ENCODE measurements at regions of chr4 and their contacts with region 1.

Region 1: DNA sequence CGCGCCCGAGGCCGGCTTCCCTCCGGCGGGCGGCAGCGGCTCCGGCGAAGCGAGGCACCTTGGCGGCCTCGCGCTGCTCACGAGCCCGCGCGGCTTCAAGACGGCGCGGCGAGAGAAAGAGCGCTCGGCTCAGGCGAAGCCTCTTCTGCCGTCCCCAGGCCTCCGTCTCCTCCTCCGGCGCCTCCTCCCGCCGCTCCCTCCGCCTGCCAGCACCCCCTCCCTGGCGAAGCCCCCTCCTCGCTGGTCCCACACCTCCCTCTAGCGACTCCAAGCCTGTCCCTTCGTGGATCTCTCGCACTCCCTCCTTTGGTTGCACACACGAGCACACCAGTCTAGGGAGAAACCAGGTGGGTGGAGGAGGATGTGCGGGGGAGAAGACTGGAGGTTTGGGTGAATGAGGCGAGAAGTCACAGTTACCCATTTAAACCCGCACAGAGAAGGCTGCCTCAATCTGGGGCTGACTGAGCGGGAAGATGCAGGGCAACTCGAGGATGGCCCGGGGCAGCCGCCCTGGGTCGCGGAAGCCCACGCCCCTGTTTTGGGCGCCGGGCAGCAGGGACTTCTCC is at the start of gene CAMK2D:
- DNase-seq: peak; percentile 81
- ATAC-seq: peak; percentile 56
- H3K4me3 ChIP-seq: peak within 1 kb of the TSS; percentile 99
- H3K27ac ChIP-seq: peak within 1 kb of the TSS; percentile 98
- H3K4me1 ChIP-seq: no peaks in the 10 kb centered on the region
- H3K27me3 ChIP-seq: no peaks in the 10 kb centered on the region
- CTCF ChIP-seq: peak; percentile 60 to 95 (median 69)
- EP300 ChIP-seq: peak in 1 of 2 experiments; percentile 33; a peak in 2 of 4 replicates
- POLR2A ChIP-seq: no peak
- RAD21 ChIP-seq: peak; percentile 89
- polyA plus RNA-seq, gene CAMK2D: 6.9 to 10.2 TPM

Region 2: GRCh38 chr4:113618205-113618604 is 143.5 kb before region 1 on chr4:
- CTCF ChIA-PET with region 1: no interaction called
- POLR2A ChIA-PET with region 1: no interaction called
- RAD21 ChIA-PET with region 1: interaction called, 5 read pairs
- SMC1A ChIA-PET with region 1: interaction called, 10 read pairs
- in situ Hi-C with region 1: no loop called
- intact Hi-C with region 1: no loop called
- DNase-seq: no peak
- ATAC-seq: peak; percentile 63
- H3K4me3 ChIP-seq: no peak overlapping the region
- H3K27ac ChIP-seq: no peak overlapping the region
- H3K4me1 ChIP-seq: peaks cover 4% of the 10 kb centered on the region; the same call in 1 of the 2 replicates
- H3K27me3 ChIP-seq: no peaks in the 10 kb centered on the region
- CTCF ChIP-seq: no peak
- EP300 ChIP-seq: peak; percentile 78 to 80; a peak in 3 of 4 replicates
- POLR2A ChIP-seq: no peak
- RAD21 ChIP-seq: no peak

Region 3: GRCh38 chr4:113684534-113685091 is 77.1 kb before region 1 on chr4:
- CTCF ChIA-PET with region 1: interaction called, 3 read pairs
- POLR2A ChIA-PET with region 1: interaction called, 3 read pairs
- RAD21 ChIA-PET with region 1: interaction called, 6 read pairs
- SMC1A ChIA-PET with region 1: interaction called, 17 read pairs
- in situ Hi-C with region 1: no loop called
- intact Hi-C with region 1: loop called (anchors 2 kb)
- DNase-seq: no peak
- ATAC-seq: peak; percentile 10; the same call in 2 of the 3 replicates
- H3K4me3 ChIP-seq: no peak overlapping the region
- H3K27ac ChIP-seq: no peak overlapping the region
- H3K4me1 ChIP-seq: peaks cover 32% of the 10 kb centered on the region
- H3K27me3 ChIP-seq: no peaks in the 10 kb centered on the region
- CTCF ChIP-seq: 0 out of 6 replicates have a peak, but pooled peaks of 1 of the 3 experiments have one; percentile 0
- EP300 ChIP-seq: no peak
- POLR2A ChIP-seq: no peak
- RAD21 ChIP-seq: 0 out of 2 replicates have a peak, but pooled peaks have one; percentile 4

Region 4: DNA sequence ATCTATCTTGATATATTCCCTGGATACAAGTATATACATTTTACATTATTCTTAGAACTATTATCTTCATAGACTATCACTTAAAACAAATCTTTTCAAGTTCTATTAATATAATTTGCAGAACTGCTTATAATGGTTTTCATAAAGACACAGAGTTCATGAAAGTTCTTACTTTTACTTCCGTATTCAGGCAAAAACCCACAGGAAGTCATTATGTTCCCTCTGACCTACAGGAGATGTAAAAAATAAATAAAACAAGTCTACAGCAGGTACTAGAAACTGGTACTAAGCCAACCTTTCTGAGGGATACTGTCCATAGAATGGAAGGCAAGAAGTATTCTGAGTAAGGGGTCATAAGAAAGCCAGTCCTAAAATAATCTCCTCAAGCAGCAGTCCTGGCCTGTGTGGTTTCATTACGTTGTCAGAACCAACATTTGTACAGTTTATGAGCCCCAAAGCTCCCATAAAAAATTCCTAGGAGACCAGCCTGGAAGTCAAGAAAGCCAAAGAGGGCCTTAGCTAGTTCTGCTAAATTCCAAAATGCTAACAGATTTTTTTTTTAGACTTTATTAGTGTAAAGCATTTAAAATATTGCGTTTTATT is 68.8 kb before region 1 on chr4:
- CTCF ChIA-PET with region 1: interaction called, 3 read pairs
- POLR2A ChIA-PET with region 1: interaction called, 3 read pairs
- RAD21 ChIA-PET with region 1: interaction called, 17 read pairs
- SMC1A ChIA-PET with region 1: interaction called, 17 read pairs
- in situ Hi-C with region 1: no loop called
- intact Hi-C with region 1: no loop called
- DNase-seq: no peak
- ATAC-seq: peak; percentile 89
- H3K4me3 ChIP-seq: no peak overlapping the region; the same call in 1 of the 2 replicates
- H3K27ac ChIP-seq: peak overlapping the region; percentile 52
- H3K4me1 ChIP-seq: peaks cover 16% of the 10 kb centered on the region
- H3K27me3 ChIP-seq: no peaks in the 10 kb centered on the region
- CTCF ChIP-seq: no peak
- EP300 ChIP-seq: peak in 1 of 2 experiments; percentile 56; a peak in 1 of 4 replicates
- POLR2A ChIP-seq: no peak
- RAD21 ChIP-seq: no peak

Region 5: GRCh38 chr4:113893546-113893945 is 131.8 kb after region 1 on chr4:
- CTCF ChIA-PET with region 1: no interaction called
- POLR2A ChIA-PET with region 1: no interaction called
- RAD21 ChIA-PET with region 1: no interaction called
- SMC1A ChIA-PET with region 1: no interaction called
- in situ Hi-C with region 1: no loop called
- intact Hi-C with region 1: no loop called
- DNase-seq: no peak
- ATAC-seq: no peak
- H3K4me3 ChIP-seq: no peak overlapping the region
- H3K27ac ChIP-seq: no peak overlapping the region
- H3K4me1 ChIP-seq: no peaks in the 10 kb centered on the region; the same call in 1 of the 2 replicates
- H3K27me3 ChIP-seq: no peaks in the 10 kb centered on the region
- CTCF ChIP-seq: 0 out of 6 replicates have a peak, but pooled peaks of 1 of the 3 experiments have one; percentile 6
- EP300 ChIP-seq: no peak
- POLR2A ChIP-seq: no peak
- RAD21 ChIP-seq: peak; percentile 40; the same call in 1 of the 2 replicates

Region 6: DNA sequence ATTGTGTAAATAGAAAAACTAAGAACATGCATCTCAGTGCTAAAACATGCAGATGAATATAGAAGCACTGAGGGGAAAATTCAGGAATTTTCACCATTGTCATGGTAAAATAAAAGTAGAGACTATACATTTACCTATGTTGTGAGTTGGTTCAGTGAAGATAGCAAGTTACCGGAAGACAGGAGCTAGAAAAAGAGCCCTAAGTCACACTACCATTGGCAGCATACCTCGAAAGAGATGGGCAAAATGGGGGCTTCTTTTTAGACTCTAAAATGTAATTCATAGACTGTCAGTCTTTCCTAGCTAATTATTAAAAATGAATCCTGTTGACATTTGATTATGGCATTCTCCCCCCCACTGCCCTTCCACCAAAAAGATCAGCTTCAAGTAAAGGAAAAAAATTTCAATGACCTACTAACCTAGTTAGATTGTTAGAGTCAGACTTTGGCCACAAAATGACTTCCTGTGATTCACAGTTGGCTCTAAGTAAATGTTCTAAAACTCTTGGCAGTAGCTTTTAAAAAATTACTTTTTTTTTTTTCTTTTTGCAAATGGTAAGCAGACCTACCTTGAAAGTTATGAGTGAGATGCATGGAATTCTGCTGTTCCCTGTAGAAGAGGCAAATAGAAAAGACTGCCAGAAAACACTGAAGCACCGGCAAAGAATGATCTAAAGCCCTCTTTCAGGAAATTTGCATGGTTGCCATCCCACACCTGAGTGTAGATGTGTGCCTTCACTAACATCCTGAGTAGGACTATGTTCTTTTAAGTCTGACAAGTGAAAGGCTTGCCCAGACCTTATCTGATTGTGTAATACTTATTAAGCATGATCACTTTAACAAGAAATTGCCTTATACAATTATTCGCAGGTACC is 244.1 kb after region 1 on chr4:
- CTCF ChIA-PET with region 1: no interaction called
- POLR2A ChIA-PET with region 1: no interaction called
- RAD21 ChIA-PET with region 1: no interaction called
- SMC1A ChIA-PET with region 1: no interaction called
- in situ Hi-C with region 1: no loop called
- intact Hi-C with region 1: no loop called
- DNase-seq: no peak
- ATAC-seq: no peak
- H3K4me3 ChIP-seq: no peak overlapping the region
- H3K27ac ChIP-seq: no peak overlapping the region
- H3K4me1 ChIP-seq: no peaks in the 10 kb centered on the region
- H3K27me3 ChIP-seq: no peaks in the 10 kb centered on the region
- CTCF ChIP-seq: no peak
- EP300 ChIP-seq: no peak
- POLR2A ChIP-seq: no peak
- RAD21 ChIP-seq: no peak

Region 7: DNA sequence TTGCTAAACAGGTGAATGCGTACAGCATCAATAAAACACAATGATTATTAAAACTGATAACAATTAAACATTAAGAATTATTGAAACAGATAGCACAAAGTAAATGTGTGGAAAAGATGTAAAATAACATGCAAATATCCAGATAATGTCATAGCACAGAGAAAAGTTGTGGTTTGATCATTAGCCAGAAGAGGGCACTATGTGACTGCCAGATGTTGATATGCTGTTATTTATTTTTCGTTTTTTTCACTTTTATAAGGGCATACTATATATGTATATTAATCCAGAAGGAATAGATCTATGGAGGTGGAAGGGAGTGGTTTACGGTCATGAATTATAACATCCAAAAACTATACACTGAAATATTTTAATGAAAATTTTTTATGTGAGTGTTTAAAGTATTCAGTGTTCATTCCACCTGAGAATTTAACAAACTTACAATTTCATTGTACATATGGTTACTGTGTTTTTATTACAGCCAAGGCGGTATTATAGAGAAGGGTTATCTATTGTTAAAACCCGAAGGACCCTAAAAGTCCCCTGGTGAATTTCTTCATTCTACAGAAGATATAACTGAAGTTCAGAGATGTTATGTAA is 625.0 kb after region 1 on chr4:
- CTCF ChIA-PET with region 1: no interaction called
- POLR2A ChIA-PET with region 1: no interaction called
- RAD21 ChIA-PET with region 1: no interaction called
- SMC1A ChIA-PET with region 1: no interaction called
- in situ Hi-C with region 1: no loop called
- intact Hi-C with region 1: loop called (anchors 10 kb)
- DNase-seq: peak; percentile 5
- ATAC-seq: peak; percentile 67
- H3K4me3 ChIP-seq: no peak overlapping the region
- H3K27ac ChIP-seq: no peak overlapping the region
- H3K4me1 ChIP-seq: no peaks in the 10 kb centered on the region
- H3K27me3 ChIP-seq: no peaks in the 10 kb centered on the region
- CTCF ChIP-seq: peak; percentile 49 to 76 (median 53)
- EP300 ChIP-seq: no peak
- POLR2A ChIP-seq: no peak
- RAD21 ChIP-seq: peak; percentile 92

Measured in GM12878 (cell line).